Right ventricle myocardium inferior (tissue), 1 donor: ENCODE measurements at regions of chr19 and their contacts with region 1.

Region 1: GRCh38 chr19:36054119-36054732 is at the start of gene THAP8:
- DNase-seq: peak; percentile 100
- ATAC-seq: peak; percentile 98
- total RNA-seq, gene THAP8: 4.1 TPM

Region 2: GRCh38 chr19:35995048-35995993 is 58.9 kb before region 1 on chr19 and contains the start of gene SDHAF1:
- intact Hi-C with region 1: loop called (anchors 1 kb)
- DNase-seq: peak; percentile 99
- ATAC-seq: peak; percentile 95
- total RNA-seq, gene SDHAF1: 9.7 TPM

Region 3: GRCh38 chr19:36014029-36014924 is 39.9 kb before region 1 on chr19 and contains the start of gene ALKBH6:
- intact Hi-C with region 1: loop called (anchors 1 kb)
- DNase-seq: peak; percentile 100
- ATAC-seq: peak; percentile 99
- total RNA-seq, gene ALKBH6: 12.1 TPM

Region 4: GRCh38 chr19:36025541-36025940 is 28.7 kb before region 1 on chr19:
- intact Hi-C with region 1: no loop called
- DNase-seq: no peak
- ATAC-seq: no peak